ENCODE measurements at regions of chr12 and their contacts with region 1.

Region 1: DNA sequence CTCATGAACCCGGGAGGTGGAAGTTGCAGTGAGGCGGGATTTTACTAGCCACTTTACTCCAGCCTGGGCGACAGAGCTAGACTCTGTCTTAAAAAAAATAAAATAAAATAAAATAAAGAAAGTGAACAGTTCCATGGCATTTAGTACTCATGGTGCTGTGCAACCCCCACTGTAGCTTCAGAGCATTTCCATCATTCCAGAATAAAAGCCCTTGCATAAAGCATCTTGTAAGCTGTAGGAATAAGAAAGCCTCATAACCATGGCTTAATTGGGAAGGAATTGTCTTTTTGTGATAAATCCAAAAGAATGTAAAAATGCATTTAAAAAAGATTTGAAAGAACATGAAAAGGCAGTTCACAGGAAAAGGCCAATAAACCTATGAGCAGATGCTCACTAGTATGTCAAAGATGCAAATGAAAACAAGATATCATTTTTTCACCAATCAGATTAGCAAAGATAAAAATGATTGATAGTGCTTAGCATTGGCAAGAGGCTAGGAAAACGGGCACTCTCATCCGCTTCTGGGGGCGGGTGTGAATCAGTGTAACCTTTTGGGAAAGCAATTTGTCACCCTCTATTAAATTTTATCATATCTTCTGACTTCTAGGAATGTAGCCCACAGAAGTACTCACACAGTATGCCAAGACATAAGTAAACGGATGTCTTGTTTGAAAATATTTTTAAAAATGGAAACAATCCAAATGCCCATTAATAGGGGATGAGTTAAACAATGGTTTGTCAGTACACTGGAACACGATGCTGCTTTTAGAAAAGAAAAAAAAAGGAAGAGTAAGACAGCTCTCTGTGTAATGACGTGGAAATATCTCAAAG is 46.6 kb downstream of the CFAP251 start:
- DNase-seq: peak; percentile 75
- H3K4me3 ChIP-seq: no peak overlapping the region
- H3K27ac ChIP-seq: peak overlapping the region; percentile 3
- H3K4me1 ChIP-seq: peaks cover 6% of the 10 kb centered on the region
- H3K27me3 ChIP-seq: no peaks in the 10 kb centered on the region
- CTCF ChIP-seq: no peak

Region 2: GRCh38 chr12:121858662-121859572 is 106.1 kb before region 1 on chr12 and contains the start of gene HPD:
- CTCF ChIA-PET with region 1: no interaction called
- dilution Hi-C with region 1: loop called (anchors 5 kb)
- in situ Hi-C with region 1: no loop called
- intact Hi-C with region 1: no loop called
- DNase-seq: peak; percentile 62
- H3K4me3 ChIP-seq: no peak within 1 kb of the TSS
- H3K27ac ChIP-seq: peak within 1 kb of the TSS; percentile 24
- H3K4me1 ChIP-seq: peaks cover 13% of the 10 kb centered on the region
- H3K27me3 ChIP-seq: no peaks in the 10 kb centered on the region
- CTCF ChIP-seq: no peak
- total RNA-seq, gene HPD: 0.17 TPM in 1 of 2 donors, not detected in the other

Region 3: GRCh38 chr12:122013791-122014590 is 49.0 kb after region 1 on chr12:
- CTCF ChIA-PET with region 1: no interaction called
- dilution Hi-C with region 1: loop called (anchors 5 kb)
- in situ Hi-C with region 1: no loop called
- intact Hi-C with region 1: no loop called
- DNase-seq: no peak
- H3K4me3 ChIP-seq: no peak overlapping the region
- H3K27ac ChIP-seq: no peak overlapping the region
- H3K4me1 ChIP-seq: no peaks in the 10 kb centered on the region
- H3K27me3 ChIP-seq: no peaks in the 10 kb centered on the region
- CTCF ChIP-seq: no peak

Region 4: DNA sequence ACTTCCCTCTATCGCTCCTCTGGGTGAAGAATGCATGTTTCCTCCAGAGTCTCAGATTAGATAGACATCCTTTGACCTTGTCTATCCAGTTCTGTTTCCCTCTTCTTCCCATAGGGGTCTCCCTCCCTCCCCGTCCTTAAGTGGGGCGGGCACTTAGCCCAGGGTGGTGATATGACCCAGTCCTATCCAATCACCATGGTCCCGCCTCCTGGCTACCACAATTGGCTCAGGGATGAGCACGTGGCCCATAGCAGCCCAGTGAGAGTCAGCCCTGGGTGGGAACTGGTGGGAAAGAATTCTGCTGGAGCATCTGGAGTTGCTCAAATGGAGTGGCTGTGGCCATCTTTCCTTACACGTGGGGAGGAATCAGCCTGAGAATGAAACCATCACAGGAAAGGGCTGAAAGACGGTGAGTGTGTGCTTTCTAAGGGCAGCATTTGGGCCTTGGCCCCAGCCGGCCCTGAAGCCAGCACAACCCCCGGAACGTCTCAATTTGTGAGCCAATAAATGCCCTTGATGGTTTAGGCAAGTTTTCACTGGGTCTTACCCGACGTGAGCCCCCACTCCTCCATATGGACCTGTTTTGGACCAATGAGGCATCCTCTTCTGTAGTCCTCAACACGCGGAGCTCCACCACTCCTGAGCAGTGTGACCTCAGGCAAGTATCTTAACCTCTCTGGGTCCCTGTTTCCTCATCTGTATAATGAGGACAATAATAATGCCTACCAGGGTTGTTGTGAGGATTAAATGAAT is 99.2 kb after region 1 on chr12:
- CTCF ChIA-PET with region 1: no interaction called
- dilution Hi-C with region 1: loop called (anchors 5 kb)
- in situ Hi-C with region 1: no loop called
- intact Hi-C with region 1: no loop called
- DNase-seq: peak; percentile 37
- H3K4me3 ChIP-seq: no peak overlapping the region
- H3K27ac ChIP-seq: no peak overlapping the region
- H3K4me1 ChIP-seq: peaks cover 16% of the 10 kb centered on the region
- H3K27me3 ChIP-seq: no peaks in the 10 kb centered on the region
- CTCF ChIP-seq: peak; percentile 10 to 21

Region 5: DNA sequence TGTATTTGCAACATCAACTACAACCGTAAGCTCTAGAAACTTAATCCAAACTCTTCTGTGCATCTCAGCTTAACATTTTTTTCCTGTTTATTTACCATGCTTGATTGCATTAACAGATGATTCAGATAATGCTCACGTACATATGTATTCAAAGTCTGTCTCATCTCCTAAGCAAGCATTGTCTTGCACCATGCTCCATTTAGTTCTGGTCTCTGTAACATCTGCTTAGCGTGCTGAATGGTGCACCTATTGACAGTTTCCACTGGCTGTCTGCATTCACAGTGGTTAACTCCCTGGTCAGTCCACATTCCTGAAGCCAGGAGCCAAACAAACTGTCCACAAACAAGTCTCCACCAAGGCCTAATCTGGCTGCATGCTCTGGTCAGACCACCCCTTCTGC is 645.8 kb after region 1 on chr12:
- CTCF ChIA-PET with region 1: no interaction called
- dilution Hi-C with region 1: no loop called
- in situ Hi-C with region 1: no loop called
- intact Hi-C with region 1: no loop called
- DNase-seq: no peak
- H3K4me3 ChIP-seq: no peak overlapping the region
- H3K27ac ChIP-seq: no peak overlapping the region
- H3K4me1 ChIP-seq: no peaks in the 10 kb centered on the region
- H3K27me3 ChIP-seq: no peaks in the 10 kb centered on the region
- CTCF ChIP-seq: no peak

Measured in mammary epithelial cell (primary cell).